ENCODE measurements at regions of chr15 and their contacts with region 1.

Region 1: GRCh38 chr15:39426552-39427532 is 154.0 kb upstream of the THBS1 start:
- DNase-seq: peak; percentile 98 to 100 (median 100)
- H3K4me3 ChIP-seq: peak overlapping the region in 6 of 7 experiments; percentile 10 to 63 (median 31)
- H3K27ac ChIP-seq: peak overlapping the region; percentile 75 to 82
- H3K4me1 ChIP-seq: peaks cover 26 to 47% (median 38%) of the 10 kb centered on the region in 4 experiments
- H3K27me3 ChIP-seq: no peaks in the 10 kb centered on the region

Region 2: GRCh38 chr15:39312984-39313383 is 113.9 kb before region 1 on chr15:
- CTCF ChIA-PET with region 1: interaction called, 18 read pairs
- POLR2A ChIA-PET with region 1: no interaction called
- DNase-seq: peak; percentile 77 to 91 (median 89)
- H3K4me3 ChIP-seq: no peak overlapping the region
- H3K27ac ChIP-seq: no peak overlapping the region
- H3K4me1 ChIP-seq: peaks cover 0 to 3% (median 0%) of the 10 kb centered on the region in 4 experiments
- H3K27me3 ChIP-seq: no peaks in the 10 kb centered on the region

Region 3: DNA sequence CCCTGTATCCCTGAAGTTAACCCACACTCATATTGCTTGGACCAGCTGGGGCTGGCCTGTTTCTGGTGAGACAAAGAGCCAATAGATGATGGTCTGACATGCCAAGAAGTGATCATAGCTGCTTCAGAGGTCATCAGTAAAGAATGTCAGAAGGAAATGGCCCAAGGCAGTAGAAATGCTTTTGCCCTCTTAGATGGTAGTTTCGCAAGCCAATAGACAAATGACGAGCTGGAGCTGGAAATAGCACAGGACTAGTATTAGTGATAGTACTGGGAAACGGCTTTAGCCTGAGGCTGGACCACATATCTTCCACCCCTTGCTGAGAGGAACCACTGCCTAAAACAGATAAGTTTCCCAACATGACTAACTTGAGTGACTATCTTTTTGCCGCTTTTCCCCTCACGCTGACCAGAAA is 22.1 kb before region 1 on chr15:
- CTCF ChIA-PET with region 1: no interaction called
- POLR2A ChIA-PET with region 1: no interaction called
- DNase-seq: peak in 2 of 3 donors; percentile 52 to 57
- H3K4me3 ChIP-seq: no peak overlapping the region
- H3K27ac ChIP-seq: no peak overlapping the region
- H3K4me1 ChIP-seq: no peaks in the 10 kb centered on the region
- H3K27me3 ChIP-seq: no peaks in the 10 kb centered on the region

Measured in common myeloid progenitor, CD34-positive (primary cell).